Activated CD4-positive, alpha-beta T cell treated with anti-CD3 and anti-CD28 coated beads, Interleukin-2, amount 10 ng/mL, durations not matched to agents 24 days and 14 days (primary cell): ENCODE measurements at regions of chr4 and their contacts with region 1.

Region 1: GRCh38 chr4:26410385-26411293 is 79.6 kb downstream of the CCKAR start:
- DNase-seq: peak; percentile 85
- H3K4me3 Mint-ChIP-seq: no peak overlapping the region
- H3K27ac Mint-ChIP-seq: no peak overlapping the region
- H3K4me1 Mint-ChIP-seq: peaks cover 17% of the 10 kb centered on the region
- H3K27me3 Mint-ChIP-seq: no peaks in the 10 kb centered on the region

Region 2: GRCh38 chr4:25986807-25987206 is 423.8 kb before region 1 on chr4:
- intact Hi-C with region 1: loop called (anchors 5 kb)
- DNase-seq: no peak
- H3K4me3 Mint-ChIP-seq: no peak overlapping the region
- H3K27ac Mint-ChIP-seq: no peak overlapping the region
- H3K4me1 Mint-ChIP-seq: peaks cover 4% of the 10 kb centered on the region
- H3K27me3 Mint-ChIP-seq: peaks cover 2% of the 10 kb centered on the region

Region 3: DNA sequence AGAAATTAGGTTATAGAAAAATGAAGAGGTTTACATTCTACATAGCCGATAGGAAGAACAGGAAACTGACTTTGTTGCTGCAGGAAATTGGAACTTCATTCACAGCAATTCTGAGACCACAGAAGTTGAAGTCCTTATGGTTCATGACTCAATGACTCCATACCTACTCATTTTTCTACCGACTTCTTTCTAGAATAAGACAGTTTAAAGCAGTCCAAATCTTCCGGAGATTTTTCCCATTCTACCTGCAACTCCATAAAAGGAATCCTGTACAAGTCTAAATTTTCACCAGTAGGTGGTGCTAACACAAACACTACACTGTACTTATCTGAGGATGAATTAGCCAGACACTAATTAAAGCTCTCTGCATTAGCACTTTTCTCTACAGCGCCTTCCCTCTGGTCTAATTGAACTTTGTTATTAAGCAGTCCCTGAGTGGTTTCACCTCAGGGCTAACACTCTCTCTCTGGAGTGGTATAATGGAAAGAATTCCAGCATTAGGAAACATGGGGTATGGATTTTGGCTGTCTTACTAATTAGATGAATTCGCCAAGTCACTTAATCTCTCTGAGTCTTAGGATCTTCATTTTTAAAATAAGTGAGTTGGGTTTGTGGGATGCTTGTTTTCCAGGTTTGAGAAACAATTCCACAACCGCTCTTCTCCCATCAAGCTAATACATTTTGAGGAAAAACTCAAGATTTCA is 328.7 kb before region 1 on chr4:
- intact Hi-C with region 1: loop called (anchors 5 kb)
- DNase-seq: peak; percentile 64
- H3K4me3 Mint-ChIP-seq: peak overlapping the region; percentile 15
- H3K27ac Mint-ChIP-seq: peak overlapping the region; percentile 89
- H3K4me1 Mint-ChIP-seq: peaks cover 68% of the 10 kb centered on the region
- H3K27me3 Mint-ChIP-seq: no peaks in the 10 kb centered on the region

Region 4: DNA sequence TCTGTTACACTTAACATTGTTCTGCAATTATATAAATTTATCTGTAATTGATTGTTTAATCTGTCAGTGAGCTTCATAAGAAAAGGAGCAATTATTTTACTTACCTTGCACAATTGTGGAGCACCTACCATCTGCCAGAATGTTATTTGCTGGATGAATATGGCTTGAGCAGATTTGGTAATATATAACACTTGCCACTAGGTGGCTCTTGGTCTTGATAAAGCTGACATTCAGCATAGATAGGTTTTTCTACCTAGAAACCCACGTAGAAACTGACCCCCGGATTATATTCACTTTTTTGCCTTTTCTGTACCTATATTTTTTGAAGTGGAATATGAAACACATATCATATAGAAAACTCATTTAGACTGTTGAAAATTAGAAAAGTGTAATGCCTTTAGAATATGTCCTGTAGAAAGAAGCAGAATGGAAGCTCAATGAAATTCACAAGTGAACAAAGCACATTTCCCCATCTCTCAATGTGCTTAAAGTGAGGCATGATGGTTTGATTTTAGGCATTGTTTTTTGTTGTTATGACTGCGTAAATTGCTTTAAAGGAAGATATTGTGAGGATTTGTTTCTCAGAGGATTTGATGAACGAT is 80.4 kb before region 1 on chr4:
- intact Hi-C with region 1: loop called (anchors 1 kb)
- DNase-seq: peak; percentile 78
- H3K4me3 Mint-ChIP-seq: peak overlapping the region; percentile 23
- H3K27ac Mint-ChIP-seq: peak overlapping the region; percentile 61
- H3K4me1 Mint-ChIP-seq: peaks cover 49% of the 10 kb centered on the region
- H3K27me3 Mint-ChIP-seq: no peaks in the 10 kb centered on the region

Region 5: DNA sequence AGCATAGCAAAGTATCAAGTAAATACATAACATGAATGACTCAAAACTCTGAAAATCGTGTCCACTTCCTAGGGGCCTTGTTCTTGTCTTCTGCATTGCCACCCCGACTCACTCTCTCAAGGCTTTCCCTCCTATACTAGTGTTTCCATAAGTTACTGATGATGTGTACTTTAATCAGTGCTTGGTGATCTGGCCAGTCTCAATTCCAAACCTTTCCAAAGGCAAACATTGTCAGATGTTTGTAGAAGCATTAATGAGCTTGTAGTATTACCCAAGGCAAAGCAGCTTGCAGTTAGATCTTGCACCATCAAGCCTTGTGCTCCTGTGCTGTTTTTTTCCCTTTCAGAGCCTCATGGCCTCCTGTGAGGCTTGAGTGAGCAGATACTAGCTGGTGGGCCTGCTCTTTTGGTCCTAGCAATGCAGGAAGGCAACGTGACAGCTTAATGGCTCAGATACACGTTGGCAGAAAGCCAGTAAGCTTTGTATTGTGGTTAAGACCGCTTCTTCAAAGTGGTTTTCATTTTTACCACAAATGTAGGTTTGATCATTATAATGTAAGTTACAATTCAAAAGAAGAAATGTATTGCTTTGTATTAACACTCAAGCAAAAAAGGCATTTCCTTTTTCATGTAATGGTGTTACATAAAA is 38.0 kb before region 1 on chr4:
- intact Hi-C with region 1: loop called (anchors 5 kb)
- DNase-seq: peak; percentile 87
- H3K4me3 Mint-ChIP-seq: peak overlapping the region; percentile 17
- H3K27ac Mint-ChIP-seq: peak overlapping the region; percentile 63
- H3K4me1 Mint-ChIP-seq: peaks cover 62% of the 10 kb centered on the region
- H3K27me3 Mint-ChIP-seq: no peaks in the 10 kb centered on the region

Region 6: GRCh38 chr4:26854701-26855100 is 444.1 kb after region 1 on chr4:
- intact Hi-C with region 1: no loop called
- DNase-seq: no peak
- H3K4me3 Mint-ChIP-seq: no peak overlapping the region
- H3K27ac Mint-ChIP-seq: no peak overlapping the region
- H3K4me1 Mint-ChIP-seq: peaks cover 31% of the 10 kb centered on the region
- H3K27me3 Mint-ChIP-seq: peaks cover 5% of the 10 kb centered on the region